AG04449 (cell line): ENCODE measurements at regions of chr16 and their contacts with region 1.

Region 1: GRCh38 chr16:58127033-58127556 is 2.1 kb downstream of the CFAP20 start:
- DNase-seq: no peak
- H3K4me3 ChIP-seq: peak overlapping the region; percentile 96
- CTCF ChIP-seq: peak; percentile 12

Region 2: GRCh38 chr16:58018804-58019203 is 108.3 kb before region 1 on chr16:
- CTCF ChIA-PET with region 1: interaction called, 39 read pairs
- POLR2A ChIA-PET with region 1: no interaction called
- DNase-seq: no peak
- H3K4me3 ChIP-seq: no peak overlapping the region
- CTCF ChIP-seq: no peak

Region 3: GRCh38 chr16:58025351-58026138 is 101.5 kb before region 1 on chr16 and contains the start of gene MMP15:
- CTCF ChIA-PET with region 1: interaction called, 23 read pairs
- POLR2A ChIA-PET with region 1: interaction called, 4 read pairs
- DNase-seq: no peak
- H3K4me3 ChIP-seq: peak within 1 kb of the TSS; percentile 60
- CTCF ChIP-seq: no peak

Region 4: DNA sequence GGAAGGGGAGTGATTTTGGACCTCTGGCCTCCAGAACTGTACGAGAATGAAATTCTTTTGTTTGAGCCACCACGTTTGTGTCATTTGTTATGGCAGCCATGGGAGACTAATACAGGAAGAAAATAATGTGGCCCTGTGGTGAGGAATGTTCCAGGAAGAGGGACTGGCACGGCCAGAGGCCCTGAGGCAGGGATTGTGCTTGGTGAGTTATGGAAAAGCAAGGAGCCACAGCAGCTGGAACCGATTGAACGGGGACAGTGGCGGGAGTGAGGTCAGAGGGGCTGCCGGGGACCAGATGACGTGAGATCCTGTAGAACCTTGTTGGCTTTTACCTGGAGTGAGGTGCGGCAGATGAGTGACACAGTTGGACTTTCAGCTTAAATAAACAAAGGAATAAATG is 49.2 kb before region 1 on chr16:
- CTCF ChIA-PET with region 1: no interaction called
- POLR2A ChIA-PET with region 1: no interaction called
- DNase-seq: no peak
- H3K4me3 ChIP-seq: no peak overlapping the region
- CTCF ChIP-seq: no peak

Region 5: GRCh38 chr16:58116046-58116445 is 11.0 kb before region 1 on chr16:
- CTCF ChIA-PET with region 1: interaction called, 15 read pairs
- POLR2A ChIA-PET with region 1: interaction called, 4 read pairs
- DNase-seq: no peak
- H3K4me3 ChIP-seq: no peak overlapping the region
- CTCF ChIP-seq: no peak

Region 6: DNA sequence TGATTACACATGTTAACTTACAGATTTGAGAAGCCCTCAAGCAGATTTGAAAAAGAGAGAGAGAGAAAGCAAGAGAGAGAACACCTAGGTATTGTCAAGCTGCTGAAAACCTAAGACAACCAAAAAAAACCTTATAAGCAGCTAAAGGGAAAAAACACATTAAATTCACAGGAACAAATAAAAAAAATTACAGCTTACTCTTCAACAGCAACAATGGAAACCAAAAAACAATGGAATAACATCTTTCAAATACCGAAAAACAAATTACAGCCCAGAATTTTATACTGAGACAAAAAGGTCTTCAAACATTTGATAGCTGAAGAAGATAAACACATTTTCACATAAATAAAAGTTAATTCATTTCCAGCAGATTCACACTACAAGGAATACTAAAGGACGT is 10.5 kb after region 1 on chr16:
- CTCF ChIA-PET with region 1: interaction called, 11 read pairs
- POLR2A ChIA-PET with region 1: interaction called, 3 read pairs
- DNase-seq: no peak
- H3K4me3 ChIP-seq: no peak overlapping the region
- CTCF ChIP-seq: no peak